Naive thymus-derived CD4-positive, alpha-beta T cell (primary cell): ENCODE measurements at regions of chr17 and their contacts with region 1.

Region 1: GRCh38 chr17:35486920-35487732 is 38.6 kb upstream of the SLFN13 start:
- DNase-seq: peak; percentile 39 to 88 (median 77)
- ATAC-seq: peak; percentile 85
- H3K4me3 ChIP-seq: peak overlapping the region; percentile 90
- H3K4me3 Mint-ChIP-seq: peak overlapping the region; percentile 80 to 99 (median 94)
- H3K27ac ChIP-seq: peak overlapping the region; percentile 82
- H3K27ac Mint-ChIP-seq: peak overlapping the region; percentile 84 to 98 (median 97)
- H3K4me1 ChIP-seq: peaks cover 10 to 24% of the 10 kb centered on the region in 2 donors
- H3K4me1 Mint-ChIP-seq: peaks cover 23 to 67% (median 45%) of the 10 kb centered on the region in 7 donors
- H3K27me3 ChIP-seq: no peaks in the 10 kb centered on the region
- H3K27me3 Mint-ChIP-seq: peaks cover 0 to 12% (median 0%) of the 10 kb centered on the region in 5 donors

Region 2: DNA sequence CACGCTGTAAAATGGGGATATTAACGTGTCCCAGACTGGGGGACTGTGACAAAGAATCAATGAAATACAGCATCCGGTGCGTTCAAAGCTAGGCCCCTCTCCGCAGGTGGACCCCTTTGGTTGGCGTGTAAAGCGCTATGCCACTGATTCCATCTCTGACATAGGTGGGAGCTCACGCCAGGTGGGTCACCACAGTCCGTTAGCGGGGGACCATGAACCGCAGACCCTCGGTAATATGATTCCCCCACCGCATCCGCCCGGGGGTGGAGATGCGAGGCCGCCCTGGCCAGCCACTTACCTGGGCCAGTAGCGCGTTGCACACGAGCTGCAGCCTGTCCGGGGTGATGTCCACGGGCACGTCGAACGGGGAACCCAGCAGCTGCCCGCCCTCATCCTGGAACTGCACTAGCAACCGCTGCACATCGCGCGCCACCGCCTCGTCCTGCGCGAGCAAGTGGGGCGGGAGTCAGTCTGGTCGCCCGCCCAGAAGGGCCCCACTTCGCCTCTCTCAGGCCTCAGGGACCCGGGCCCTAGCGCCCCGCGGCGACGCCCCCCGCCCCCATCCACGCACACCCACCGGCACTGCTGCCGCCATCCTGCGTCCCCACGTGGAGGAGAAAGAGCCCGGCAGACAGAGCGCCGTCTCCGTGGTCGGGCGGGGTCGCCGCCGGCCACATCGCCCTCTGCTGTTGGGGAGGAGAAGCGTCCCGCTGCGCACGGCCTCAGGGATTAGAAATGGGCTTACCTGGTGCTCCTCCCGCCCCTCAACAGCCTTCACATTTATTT is 345.3 kb before region 1 on chr17 and contains the start of gene NLE1:
- CTCF ChIA-PET with region 1: no interaction called
- POLR2A ChIA-PET with region 1: no interaction called
- intact Hi-C with region 1: loop called in 1 of 2 experiments (anchors 1 kb)
- DNase-seq: peak; percentile 79 to 94 (median 89)
- ATAC-seq: peak; percentile 100
- H3K4me3 ChIP-seq: peak within 1 kb of the TSS; percentile 79
- H3K4me3 Mint-ChIP-seq: peak within 1 kb of the TSS; percentile 77 to 88 (median 86)
- H3K27ac ChIP-seq: peak within 1 kb of the TSS; percentile 81
- H3K27ac Mint-ChIP-seq: peak within 1 kb of the TSS; percentile 66 to 90 (median 87)
- H3K4me1 ChIP-seq: peaks cover 6 to 13% of the 10 kb centered on the region in 2 donors
- H3K4me1 Mint-ChIP-seq: peaks cover 7 to 30% (median 21%) of the 10 kb centered on the region in 7 donors
- H3K27me3 ChIP-seq: no peaks in the 10 kb centered on the region
- H3K27me3 Mint-ChIP-seq: no peaks in the 10 kb centered on the region
- total RNA-seq, gene NLE1: 10.0 to 29.4 (median 21.8) TPM

Region 3: GRCh38 chr17:35214631-35215273 is 272.4 kb before region 1 on chr17:
- CTCF ChIA-PET with region 1: no interaction called
- POLR2A ChIA-PET with region 1: interaction called, 18 read pairs
- intact Hi-C with region 1: loop called in 1 of 2 experiments (anchors 1 kb)
- DNase-seq: peak in 6 of 9 donors; percentile 44 to 64 (median 54)
- ATAC-seq: peak; percentile 36
- H3K4me3 ChIP-seq: peak overlapping the region; percentile 47
- H3K4me3 Mint-ChIP-seq: peak overlapping the region; percentile 69 to 91 (median 84)
- H3K27ac ChIP-seq: peak overlapping the region; percentile 76
- H3K27ac Mint-ChIP-seq: peak overlapping the region; percentile 90 to 99 (median 98)
- H3K4me1 ChIP-seq: peaks cover 75 to 85% of the 10 kb centered on the region in 2 donors
- H3K4me1 Mint-ChIP-seq: peaks cover 69 to 92% (median 87%) of the 10 kb centered on the region in 7 donors
- H3K27me3 ChIP-seq: no peaks in the 10 kb centered on the region
- H3K27me3 Mint-ChIP-seq: no peaks in the 10 kb centered on the region

Region 4: DNA sequence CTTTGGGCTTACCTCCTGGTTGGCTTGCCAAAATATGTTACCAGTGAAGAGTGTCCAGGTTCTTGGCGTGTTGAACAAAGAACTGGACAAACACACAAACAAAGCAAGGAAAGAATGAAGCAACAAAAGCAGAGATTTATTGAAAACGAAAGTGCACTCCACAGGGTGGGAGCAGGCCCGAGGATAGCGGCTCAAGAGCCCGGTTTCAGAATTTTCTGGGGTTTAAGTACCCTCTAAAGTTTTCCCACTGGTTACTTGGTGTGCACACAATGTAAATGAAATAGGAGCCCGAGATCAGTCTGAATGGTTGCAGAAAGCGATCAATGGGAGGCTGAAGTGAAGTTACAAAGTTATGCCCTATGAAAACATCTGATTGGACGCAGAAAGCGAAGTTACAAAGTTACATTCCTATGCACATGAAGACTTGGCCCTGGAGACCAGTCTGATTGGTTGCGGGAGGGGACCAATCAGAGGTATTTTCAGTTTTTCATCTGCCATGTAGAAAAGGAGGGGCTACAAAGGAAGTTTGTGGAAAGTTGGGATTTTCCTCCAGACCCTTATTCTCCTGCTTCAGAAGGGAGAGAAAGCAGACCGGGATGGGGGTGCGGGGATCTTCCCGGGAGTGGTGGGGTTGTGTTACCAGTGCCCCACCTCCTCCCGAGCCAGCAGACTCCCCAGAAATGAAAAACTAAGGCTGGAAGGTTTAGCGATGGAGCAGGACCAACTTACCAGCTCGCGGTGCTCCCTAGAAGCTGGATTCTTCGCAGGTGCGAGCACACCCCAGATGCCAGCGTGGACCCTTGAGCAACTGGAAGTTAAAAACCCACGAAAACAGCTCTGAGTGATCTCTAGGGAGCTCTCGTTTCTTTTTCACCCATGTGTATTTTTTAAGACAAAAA is 54.7 kb before region 1 on chr17 and contains the start of gene SLFN12:
- CTCF ChIA-PET with region 1: interaction called, 3 read pairs
- POLR2A ChIA-PET with region 1: interaction called, 10 read pairs
- intact Hi-C with region 1: loop called (anchors 1 to 5 kb)
- DNase-seq: peak in 8 of 9 donors; percentile 31 to 75 (median 70)
- ATAC-seq: peak; percentile 95
- H3K4me3 ChIP-seq: peak within 1 kb of the TSS; percentile 70
- H3K4me3 Mint-ChIP-seq: peak within 1 kb of the TSS; percentile 86 to 100 (median 96)
- H3K27ac ChIP-seq: peak within 1 kb of the TSS; percentile 63
- H3K27ac Mint-ChIP-seq: peak within 1 kb of the TSS; percentile 82 to 94 (median 91)
- H3K4me1 ChIP-seq: peaks cover 16 to 28% of the 10 kb centered on the region in 2 donors
- H3K4me1 Mint-ChIP-seq: peaks cover 36 to 65% (median 59%) of the 10 kb centered on the region in 7 donors
- H3K27me3 ChIP-seq: no peaks in the 10 kb centered on the region
- H3K27me3 Mint-ChIP-seq: no peaks in the 10 kb centered on the region
- total RNA-seq, gene SLFN12: 4.2 to 14.9 (median 6.5) TPM

Region 5: DNA sequence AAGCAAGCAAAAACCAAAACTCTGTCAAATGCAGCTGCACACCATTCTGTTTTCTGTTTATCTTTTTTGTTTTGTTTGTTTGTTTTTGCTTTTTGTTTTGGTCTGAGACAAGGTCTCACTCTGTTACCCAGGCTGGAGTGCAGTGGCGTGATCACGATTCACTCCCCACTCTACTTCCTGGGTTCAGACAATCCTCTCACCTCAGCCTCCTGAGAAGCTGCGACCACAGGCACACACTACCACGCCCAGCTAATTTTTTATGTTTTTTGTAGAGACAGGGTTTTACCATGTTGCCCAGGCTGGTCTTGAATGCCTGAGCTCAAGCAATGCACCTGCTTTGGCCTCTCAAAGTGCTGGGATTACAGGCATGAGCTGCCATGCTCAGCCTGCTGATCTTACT is 19.3 kb before region 1 on chr17:
- CTCF ChIA-PET with region 1: no interaction called
- POLR2A ChIA-PET with region 1: interaction called, 28 read pairs
- intact Hi-C with region 1: loop called in 1 of 2 experiments (anchors 2 kb)
- DNase-seq: peak in 4 of 9 donors; percentile 19 to 21 (median 20)
- ATAC-seq: peak; percentile 75
- H3K4me3 ChIP-seq: no peak overlapping the region
- H3K4me3 Mint-ChIP-seq: peak overlapping the region; percentile 32 to 72 (median 58)
- H3K27ac ChIP-seq: no peak overlapping the region
- H3K27ac Mint-ChIP-seq: peak overlapping the region; percentile 10 to 89 (median 71)
- H3K4me1 ChIP-seq: peaks cover 19 to 20% of the 10 kb centered on the region in 2 donors
- H3K4me1 Mint-ChIP-seq: peaks cover 23 to 74% (median 45%) of the 10 kb centered on the region in 7 donors
- H3K27me3 ChIP-seq: no peaks in the 10 kb centered on the region
- H3K27me3 Mint-ChIP-seq: no peaks in the 10 kb centered on the region

Region 6: DNA sequence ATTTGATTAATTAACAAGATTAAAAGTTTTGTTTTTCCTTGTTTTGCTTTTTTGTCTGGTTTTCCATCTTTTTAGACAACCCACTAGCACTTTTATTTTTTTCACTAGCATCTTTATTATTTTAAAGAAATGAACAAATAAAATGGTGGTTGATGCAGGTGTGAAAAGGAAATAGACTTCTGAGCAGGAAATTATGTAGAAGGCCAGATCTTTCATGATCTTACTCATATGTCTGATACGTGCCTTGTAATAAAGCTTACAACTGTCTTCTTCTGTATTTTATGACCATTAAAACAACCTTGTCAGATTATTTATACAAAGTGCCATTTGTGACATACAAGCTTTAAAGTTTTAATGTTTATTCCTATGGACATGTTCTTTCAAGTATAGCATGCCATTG is 44.0 kb after region 1 on chr17:
- CTCF ChIA-PET with region 1: interaction called, 11 read pairs
- POLR2A ChIA-PET with region 1: interaction called, 133 read pairs
- intact Hi-C with region 1: loop called in 1 of 2 experiments (anchors 1 kb)
- DNase-seq: no peak
- ATAC-seq: no peak
- H3K4me3 ChIP-seq: peak overlapping the region; percentile 28
- H3K4me3 Mint-ChIP-seq: peak overlapping the region in 8 of 10 donors; percentile 16 to 76 (median 55)
- H3K27ac ChIP-seq: peak overlapping the region; percentile 50
- H3K27ac Mint-ChIP-seq: peak overlapping the region in 8 of 9 donors; percentile 15 to 89 (median 60)
- H3K4me1 ChIP-seq: peaks cover 30 to 45% of the 10 kb centered on the region in 2 donors
- H3K4me1 Mint-ChIP-seq: peaks cover 46 to 84% (median 70%) of the 10 kb centered on the region in 7 donors
- H3K27me3 ChIP-seq: no peaks in the 10 kb centered on the region
- H3K27me3 Mint-ChIP-seq: no peaks in the 10 kb centered on the region

Region 7: GRCh38 chr17:35548208-35548810 is 61.2 kb after region 1 on chr17:
- CTCF ChIA-PET with region 1: no interaction called
- POLR2A ChIA-PET with region 1: no interaction called
- intact Hi-C with region 1: no loop called
- DNase-seq: no peak
- ATAC-seq: no peak
- H3K4me3 ChIP-seq: no peak overlapping the region
- H3K4me3 Mint-ChIP-seq: no peak overlapping the region
- H3K27ac ChIP-seq: no peak overlapping the region
- H3K27ac Mint-ChIP-seq: no peak overlapping the region
- H3K4me1 ChIP-seq: no peaks in the 10 kb centered on the region
- H3K4me1 Mint-ChIP-seq: peaks cover 0 to 26% (median 5%) of the 10 kb centered on the region in 7 donors
- H3K27me3 ChIP-seq: no peaks in the 10 kb centered on the region
- H3K27me3 Mint-ChIP-seq: peaks cover 0 to 15% (median 0%) of the 10 kb centered on the region in 5 donors

Region 8: DNA sequence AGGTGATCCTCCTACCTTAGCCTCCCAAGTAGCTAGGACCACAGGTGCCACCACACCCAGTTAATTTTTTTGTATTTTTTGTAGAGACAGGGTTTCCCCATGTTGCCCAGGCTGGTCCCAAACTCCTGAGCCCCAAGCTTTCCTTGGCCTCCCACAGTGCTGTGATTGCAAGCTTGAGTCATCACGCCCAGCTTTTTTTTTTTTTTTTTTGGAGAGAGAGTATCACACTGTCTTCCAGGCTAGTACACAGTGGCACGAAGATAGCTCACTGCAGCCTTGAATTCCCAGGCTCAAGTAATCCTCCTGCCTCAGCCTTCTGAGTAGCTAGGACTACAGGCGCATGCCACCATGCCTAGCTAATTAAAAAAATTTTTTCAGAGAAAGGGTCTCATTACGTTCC is 354.4 kb after region 1 on chr17:
- CTCF ChIA-PET with region 1: no interaction called
- POLR2A ChIA-PET with region 1: no interaction called
- intact Hi-C with region 1: no loop called
- DNase-seq: no peak
- ATAC-seq: no peak
- H3K4me3 ChIP-seq: no peak overlapping the region
- H3K4me3 Mint-ChIP-seq: no peak overlapping the region
- H3K27ac ChIP-seq: no peak overlapping the region
- H3K27ac Mint-ChIP-seq: no peak overlapping the region
- H3K4me1 ChIP-seq: no peaks in the 10 kb centered on the region
- H3K4me1 Mint-ChIP-seq: peaks cover 0 to 6% (median 0%) of the 10 kb centered on the region in 7 donors
- H3K27me3 ChIP-seq: no peaks in the 10 kb centered on the region
- H3K27me3 Mint-ChIP-seq: no peaks in the 10 kb centered on the region